ENCODE measurements at regions of chr13 and their contacts with region 1.

Region 1: DNA sequence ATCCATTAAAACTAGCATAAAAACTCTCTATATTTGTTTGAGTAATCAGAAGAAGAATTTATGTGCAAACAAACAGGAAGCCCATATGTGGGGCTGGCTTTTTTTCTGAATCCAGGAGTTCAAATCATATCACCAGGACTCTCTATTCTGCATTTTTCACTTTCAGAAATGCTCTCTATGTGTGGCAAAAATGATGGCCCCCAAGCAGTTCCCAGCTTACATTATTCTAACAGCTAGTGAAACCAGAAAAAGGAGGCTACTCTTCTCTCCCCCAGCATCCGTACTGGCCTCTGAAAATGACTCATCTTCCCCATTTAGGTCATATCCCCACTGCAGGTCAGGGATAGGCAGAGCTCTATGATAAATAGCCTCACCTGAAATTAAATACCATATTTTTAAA is 20.4 kb downstream of the RBM26 start:
- DNase-seq: no peak
- H3K4me3 Mint-ChIP-seq: peak overlapping the region; percentile 34
- H3K27ac Mint-ChIP-seq: no peak overlapping the region
- H3K4me1 Mint-ChIP-seq: peaks cover 72% of the 10 kb centered on the region
- H3K27me3 Mint-ChIP-seq: no peaks in the 10 kb centered on the region

Region 2: DNA sequence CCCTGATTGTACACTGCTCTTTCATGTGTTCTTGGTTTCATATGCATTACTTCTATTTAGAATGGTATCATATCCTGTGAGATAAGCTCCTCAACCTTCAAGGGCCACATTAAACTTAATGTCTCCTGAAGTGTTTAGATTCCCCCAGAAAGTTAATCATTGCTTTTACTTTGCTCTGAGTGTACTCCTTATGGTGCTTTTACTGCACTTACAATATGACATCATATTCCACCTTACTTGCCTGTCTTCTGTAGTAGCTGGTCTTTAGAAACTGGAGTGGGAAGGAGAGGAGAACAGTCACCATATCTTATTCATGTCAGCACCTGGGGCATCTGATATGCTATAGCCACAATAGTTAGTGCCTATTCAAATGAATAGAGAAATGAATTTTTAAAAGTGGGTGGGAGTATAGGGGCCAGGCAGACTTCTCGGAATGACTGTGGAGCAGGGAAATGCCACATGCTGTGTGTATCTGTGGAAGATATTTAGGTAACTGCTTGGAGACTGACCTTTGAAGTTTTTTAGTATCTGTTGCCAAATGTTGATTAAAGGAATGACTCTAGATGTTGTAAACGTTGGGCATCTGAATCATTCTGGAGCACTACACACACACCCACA is 1648.0 kb before region 1 on chr13:
- intact Hi-C with region 1: loop called (anchors 5 kb)
- DNase-seq: no peak
- H3K4me3 Mint-ChIP-seq: no peak overlapping the region
- H3K27ac Mint-ChIP-seq: no peak overlapping the region
- H3K4me1 Mint-ChIP-seq: peaks cover 13% of the 10 kb centered on the region
- H3K27me3 Mint-ChIP-seq: no peaks in the 10 kb centered on the region

Region 3: DNA sequence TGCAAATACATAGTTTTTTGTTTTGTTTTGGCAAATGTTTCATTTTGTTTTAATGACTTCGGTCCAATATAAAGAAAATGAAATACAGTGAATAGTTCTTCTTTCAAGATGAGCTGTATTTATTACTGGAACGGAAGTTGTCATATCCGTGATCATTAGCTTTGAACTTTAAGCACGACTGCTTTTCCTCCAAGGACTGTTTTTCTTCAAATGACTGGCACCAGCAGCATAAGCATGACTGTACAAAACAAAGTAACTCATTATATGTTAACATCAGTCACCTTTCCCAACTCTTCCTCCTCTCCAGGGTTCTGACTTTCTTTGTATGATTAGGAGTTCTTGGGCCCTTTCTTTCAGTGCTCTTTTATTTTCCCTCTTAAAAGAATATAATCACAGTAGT is 1487.6 kb before region 1 on chr13:
- intact Hi-C with region 1: no loop called
- DNase-seq: no peak
- H3K4me3 Mint-ChIP-seq: no peak overlapping the region
- H3K27ac Mint-ChIP-seq: no peak overlapping the region
- H3K4me1 Mint-ChIP-seq: no peaks in the 10 kb centered on the region
- H3K27me3 Mint-ChIP-seq: no peaks in the 10 kb centered on the region

Region 4: GRCh38 chr13:79194272-79194671 is 191.4 kb before region 1 on chr13:
- intact Hi-C with region 1: loop called (anchors 1 kb)
- DNase-seq: peak; percentile 62
- H3K4me3 Mint-ChIP-seq: peak overlapping the region; percentile 60
- H3K27ac Mint-ChIP-seq: peak overlapping the region; percentile 22
- H3K4me1 Mint-ChIP-seq: peaks cover 56% of the 10 kb centered on the region
- H3K27me3 Mint-ChIP-seq: no peaks in the 10 kb centered on the region

Region 5: GRCh38 chr13:79320433-79320832 is 65.3 kb before region 1 on chr13:
- intact Hi-C with region 1: loop called (anchors 2 kb)
- DNase-seq: no peak
- H3K4me3 Mint-ChIP-seq: no peak overlapping the region
- H3K27ac Mint-ChIP-seq: no peak overlapping the region
- H3K4me1 Mint-ChIP-seq: peaks cover 5% of the 10 kb centered on the region
- H3K27me3 Mint-ChIP-seq: no peaks in the 10 kb centered on the region

Region 6: DNA sequence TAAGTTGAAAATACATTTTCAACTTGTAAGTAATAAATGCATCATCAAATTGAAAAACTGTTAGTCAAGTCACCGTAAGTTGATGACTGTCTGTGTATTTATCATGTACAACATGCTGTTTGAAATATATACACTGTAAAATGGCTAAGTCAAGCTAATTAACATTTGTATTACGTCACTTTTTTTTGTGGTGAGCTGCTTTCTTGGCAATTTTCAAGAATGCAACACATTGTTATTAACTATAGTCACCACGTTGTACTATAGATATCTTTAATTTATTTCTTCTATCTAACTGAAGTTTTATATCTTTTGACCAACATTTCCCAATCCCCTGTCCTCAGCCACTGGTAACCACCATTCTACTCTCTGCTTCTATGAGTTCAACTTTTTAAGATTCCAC is 36.7 kb before region 1 on chr13:
- intact Hi-C with region 1: loop called (anchors 5 kb)
- DNase-seq: no peak
- H3K4me3 Mint-ChIP-seq: no peak overlapping the region
- H3K27ac Mint-ChIP-seq: no peak overlapping the region
- H3K4me1 Mint-ChIP-seq: peaks cover 24% of the 10 kb centered on the region
- H3K27me3 Mint-ChIP-seq: no peaks in the 10 kb centered on the region

Region 7: GRCh38 chr13:79360095-79360494 is 25.6 kb before region 1 on chr13:
- intact Hi-C with region 1: loop called (anchors 1 kb)
- DNase-seq: no peak
- H3K4me3 Mint-ChIP-seq: no peak overlapping the region
- H3K27ac Mint-ChIP-seq: peak overlapping the region; percentile 57
- H3K4me1 Mint-ChIP-seq: peaks cover 34% of the 10 kb centered on the region
- H3K27me3 Mint-ChIP-seq: no peaks in the 10 kb centered on the region

Measured in activated T-helper 1 cell treated with anti-CD3 and anti-CD28 coated beads, Interleukin-12 subunit alpha, Interleukin-12 subunit beta, Interleukin-2, Interleukin-4 antibody, amounts not matched to agents 30 ng/mL and 10 ng/mL and 1 ng/mL, durations not matched to agents 14 hours and 24 hours and 36 hours (primary cell).